IMR-90 (cell line): ENCODE measurements at regions of chr4 and their contacts with region 1.

Region 1: GRCh38 chr4:184538023-184538599 is 63.8 kb upstream of the IRF2 start:
- DNase-seq: peak; percentile 90
- ATAC-seq: peak; percentile 79
- H3K4me3 ChIP-seq: peak overlapping the region; percentile 81
- H3K27ac ChIP-seq: peak overlapping the region; percentile 63
- H3K4me1 ChIP-seq: no peaks in the 10 kb centered on the region
- H3K27me3 ChIP-seq: no peaks in the 10 kb centered on the region
- CTCF ChIP-seq: peak; percentile 85
- POLR2A ChIP-seq: no peak
- RAD21 ChIP-seq: peak; percentile 90

Region 2: DNA sequence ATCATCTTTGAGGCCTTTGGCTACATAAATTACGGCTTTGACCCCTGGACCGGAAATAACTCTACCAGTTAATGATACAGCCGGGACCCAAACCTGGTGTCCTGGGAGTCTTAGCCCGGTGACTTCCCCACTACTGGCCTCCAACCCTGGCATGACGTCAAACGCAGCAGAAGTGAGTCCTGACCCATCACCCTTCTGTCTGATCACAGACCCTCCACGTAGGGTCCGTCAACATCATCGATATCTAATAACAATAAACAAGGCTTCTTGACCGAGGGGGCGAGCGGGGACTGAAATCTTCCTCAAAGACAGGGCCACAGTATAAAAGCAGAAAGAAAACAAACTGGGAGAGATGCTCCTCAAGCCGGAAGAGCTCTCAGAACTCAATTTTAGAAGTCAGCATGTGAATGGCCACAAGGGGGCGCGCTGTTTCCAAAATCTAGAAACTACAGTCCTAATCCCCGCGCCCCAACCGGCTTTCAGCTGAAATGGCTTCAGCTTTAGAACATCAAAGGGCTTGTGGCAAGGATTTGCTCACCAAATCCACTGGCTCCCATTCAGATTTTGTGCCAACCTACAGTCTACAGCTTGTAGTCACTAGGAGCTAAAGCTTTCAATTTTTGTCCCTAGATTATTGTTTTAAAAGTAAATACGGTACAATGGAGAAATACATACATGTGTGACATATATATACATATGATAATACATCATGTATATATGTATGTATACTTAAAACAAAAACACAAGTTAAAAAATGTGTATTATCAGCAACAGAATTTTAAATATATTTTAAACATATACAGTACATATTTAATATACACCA is 274.0 kb before region 1 on chr4:
- CTCF ChIA-PET with region 1: interaction called, 11 read pairs
- POLR2A ChIA-PET with region 1: interaction called, 3 read pairs
- dilution Hi-C with region 1: no loop called
- in situ Hi-C with region 1: loop called (anchors 5 kb)
- intact Hi-C with region 1: loop called (anchors 1 kb)
- DNase-seq: peak; percentile 90
- ATAC-seq: peak; percentile 74
- H3K4me3 ChIP-seq: no peak overlapping the region
- H3K27ac ChIP-seq: no peak overlapping the region
- H3K4me1 ChIP-seq: peaks cover 14% of the 10 kb centered on the region
- H3K27me3 ChIP-seq: no peaks in the 10 kb centered on the region
- CTCF ChIP-seq: peak; percentile 91
- POLR2A ChIP-seq: no peak
- RAD21 ChIP-seq: peak; percentile 82

Region 3: DNA sequence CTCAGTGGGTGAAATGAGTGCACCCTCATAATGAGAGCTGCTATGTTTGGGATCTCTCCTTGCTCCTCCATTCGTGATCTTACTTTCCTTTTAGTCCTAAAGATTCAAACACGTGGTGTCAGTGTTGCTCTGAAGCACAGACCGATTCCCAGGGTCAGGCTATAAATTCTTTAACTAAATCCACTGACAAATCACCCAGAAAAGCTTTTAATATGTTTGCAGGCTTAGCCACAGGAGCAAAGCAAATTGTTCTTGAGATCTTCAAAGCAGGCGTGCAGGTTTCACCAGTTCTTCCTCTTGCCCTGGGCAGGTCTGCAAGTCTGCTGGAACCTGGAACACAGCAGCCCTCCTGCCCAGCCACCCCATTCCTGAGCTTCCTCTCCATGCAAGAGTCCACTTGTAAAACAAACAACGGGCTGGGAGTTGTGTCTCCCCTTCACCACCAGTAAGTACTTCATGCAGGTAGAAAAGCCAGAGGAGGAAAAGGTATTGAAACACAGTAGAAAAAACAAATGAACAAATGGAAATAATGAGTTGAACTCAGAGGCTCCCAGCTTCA is 250.3 kb before region 1 on chr4:
- CTCF ChIA-PET with region 1: interaction called, 3 read pairs
- POLR2A ChIA-PET with region 1: no interaction called
- dilution Hi-C with region 1: no loop called
- in situ Hi-C with region 1: no loop called
- intact Hi-C with region 1: loop called (anchors 1 kb)
- DNase-seq: peak; percentile 68
- ATAC-seq: peak; percentile 90
- H3K4me3 ChIP-seq: no peak overlapping the region
- H3K27ac ChIP-seq: no peak overlapping the region
- H3K4me1 ChIP-seq: peaks cover 4% of the 10 kb centered on the region; the same call in 1 of the 2 replicates
- H3K27me3 ChIP-seq: no peaks in the 10 kb centered on the region
- CTCF ChIP-seq: peak; percentile 57
- POLR2A ChIP-seq: no peak
- RAD21 ChIP-seq: peak; percentile 70

Region 4: GRCh38 chr4:184384056-184384809 is 153.9 kb before region 1 on chr4:
- CTCF ChIA-PET with region 1: no interaction called
- POLR2A ChIA-PET with region 1: no interaction called
- dilution Hi-C with region 1: no loop called
- in situ Hi-C with region 1: no loop called
- intact Hi-C with region 1: loop called (anchors 1 kb)
- DNase-seq: peak; percentile 96
- ATAC-seq: peak; percentile 78
- H3K4me3 ChIP-seq: peak overlapping the region; percentile 17; the same call in 1 of the 2 replicates
- H3K27ac ChIP-seq: peak overlapping the region; percentile 92
- H3K4me1 ChIP-seq: peaks cover 27% of the 10 kb centered on the region
- H3K27me3 ChIP-seq: no peaks in the 10 kb centered on the region
- CTCF ChIP-seq: no peak
- POLR2A ChIP-seq: peak; percentile 41; the same call in 1 of the 2 replicates
- RAD21 ChIP-seq: 0 out of 2 replicates have a peak, but pooled peaks have one; percentile 3

Region 5: DNA sequence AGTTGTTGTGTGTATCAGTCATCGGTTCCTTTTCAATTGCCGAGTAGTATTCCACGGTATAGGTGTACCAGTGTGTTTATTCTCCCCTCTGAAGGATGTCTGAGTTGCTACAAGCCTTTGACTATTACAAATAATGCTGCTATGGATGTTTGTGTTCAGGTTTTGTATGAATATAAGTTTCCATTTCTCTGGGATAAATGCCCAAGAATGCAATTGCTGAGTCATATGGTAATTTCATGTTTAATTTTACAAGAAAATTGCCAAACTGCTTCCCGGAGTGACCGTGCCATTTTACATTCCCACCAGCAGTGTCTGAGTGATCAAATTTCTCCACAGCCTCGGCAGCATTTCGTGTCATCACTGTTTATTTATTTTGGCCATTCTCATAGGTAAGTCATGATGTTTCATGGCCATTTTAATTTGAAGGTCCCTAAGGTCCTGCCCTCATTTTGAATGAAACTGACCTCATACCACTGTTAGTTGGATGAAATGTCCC is 137.7 kb before region 1 on chr4:
- CTCF ChIA-PET with region 1: no interaction called
- POLR2A ChIA-PET with region 1: no interaction called
- dilution Hi-C with region 1: no loop called
- in situ Hi-C with region 1: no loop called
- intact Hi-C with region 1: loop called (anchors 5 kb)
- DNase-seq: peak; percentile 97
- ATAC-seq: peak; percentile 83
- H3K4me3 ChIP-seq: no peak overlapping the region
- H3K27ac ChIP-seq: peak overlapping the region; percentile 86; the same call in 1 of the 2 replicates
- H3K4me1 ChIP-seq: peaks cover 13% of the 10 kb centered on the region
- H3K27me3 ChIP-seq: no peaks in the 10 kb centered on the region
- CTCF ChIP-seq: peak; percentile 55
- POLR2A ChIP-seq: no peak
- RAD21 ChIP-seq: peak; percentile 31; the same call in 1 of the 2 replicates

Region 6: GRCh38 chr4:184733654-184734524 is 195.8 kb after region 1 on chr4 and contains the start of gene CENPU:
- CTCF ChIA-PET with region 1: no interaction called
- POLR2A ChIA-PET with region 1: no interaction called
- dilution Hi-C with region 1: no loop called
- in situ Hi-C with region 1: no loop called
- intact Hi-C with region 1: loop called (anchors 5 kb)
- DNase-seq: peak; percentile 98
- ATAC-seq: peak; percentile 98
- H3K4me3 ChIP-seq: peak within 1 kb of the TSS; percentile 74
- H3K27ac ChIP-seq: peak within 1 kb of the TSS; percentile 11; the same call in 1 of the 2 replicates
- H3K4me1 ChIP-seq: peaks cover 4% of the 10 kb centered on the region
- H3K27me3 ChIP-seq: no peaks in the 10 kb centered on the region
- CTCF ChIP-seq: no peak
- POLR2A ChIP-seq: no peak; the same call in 1 of the 2 replicates
- RAD21 ChIP-seq: no peak
- total RNA-seq, gene CENPU: 13.6 and 26.7 TPM in 2 replicates